H1 (cell line): ENCODE measurements at regions of chr2 and their contacts with region 1.

Region 1: GRCh38 chr2:10057231-10058107 is 14.1 kb downstream of the KLF11 start:
- DNase-seq: peak; percentile 80 to 85
- H3K4me3 ChIP-seq: peak overlapping the region; percentile 28 to 56 (median 40); a peak in 7 of 8 replicates
- H3K27ac ChIP-seq: no peak overlapping the region
- H3K4me1 ChIP-seq: peaks cover 0 to 16% (median 2%) of the 10 kb centered on the region in 4 experiments; a peak in 3 of 7 replicates
- H3K27me3 ChIP-seq: no peaks in the 10 kb centered on the region
- CTCF ChIP-seq: no peak
- EP300 ChIP-seq: no peak
- POLR2A ChIP-seq: peak in 1 of 2 experiments; percentile 42; a peak in 1 of 3 replicates
- RAD21 ChIP-seq: no peak; a peak in 1 of 4 replicates

Region 2: GRCh38 chr2:9993488-9994165 is 63.8 kb before region 1 on chr2:
- CTCF ChIA-PET with region 1: no interaction called
- POLR2A ChIA-PET with region 1: no interaction called
- DNase-seq: no peak
- H3K4me3 ChIP-seq: no peak overlapping the region
- H3K27ac ChIP-seq: no peak overlapping the region
- H3K4me1 ChIP-seq: no peaks in the 10 kb centered on the region
- H3K27me3 ChIP-seq: no peaks in the 10 kb centered on the region
- CTCF ChIP-seq: no peak
- EP300 ChIP-seq: no peak
- POLR2A ChIP-seq: no peak
- RAD21 ChIP-seq: no peak

Region 3: GRCh38 chr2:10036095-10036884 is 21.2 kb before region 1 on chr2:
- CTCF ChIA-PET with region 1: interaction called, 11 read pairs
- POLR2A ChIA-PET with region 1: interaction called, 3 read pairs
- DNase-seq: no peak
- H3K4me3 ChIP-seq: no peak overlapping the region
- H3K27ac ChIP-seq: no peak overlapping the region
- H3K4me1 ChIP-seq: no peaks in the 10 kb centered on the region; a peak in 1 of 7 replicates
- H3K27me3 ChIP-seq: peaks cover 0 to 6% (median 3%) of the 10 kb centered on the region in 4 experiments; a peak in 4 of 7 replicates
- CTCF ChIP-seq: peak; percentile 60 to 76 (median 70)
- EP300 ChIP-seq: no peak
- POLR2A ChIP-seq: no peak
- RAD21 ChIP-seq: peak; percentile 36 to 49

Region 4: DNA sequence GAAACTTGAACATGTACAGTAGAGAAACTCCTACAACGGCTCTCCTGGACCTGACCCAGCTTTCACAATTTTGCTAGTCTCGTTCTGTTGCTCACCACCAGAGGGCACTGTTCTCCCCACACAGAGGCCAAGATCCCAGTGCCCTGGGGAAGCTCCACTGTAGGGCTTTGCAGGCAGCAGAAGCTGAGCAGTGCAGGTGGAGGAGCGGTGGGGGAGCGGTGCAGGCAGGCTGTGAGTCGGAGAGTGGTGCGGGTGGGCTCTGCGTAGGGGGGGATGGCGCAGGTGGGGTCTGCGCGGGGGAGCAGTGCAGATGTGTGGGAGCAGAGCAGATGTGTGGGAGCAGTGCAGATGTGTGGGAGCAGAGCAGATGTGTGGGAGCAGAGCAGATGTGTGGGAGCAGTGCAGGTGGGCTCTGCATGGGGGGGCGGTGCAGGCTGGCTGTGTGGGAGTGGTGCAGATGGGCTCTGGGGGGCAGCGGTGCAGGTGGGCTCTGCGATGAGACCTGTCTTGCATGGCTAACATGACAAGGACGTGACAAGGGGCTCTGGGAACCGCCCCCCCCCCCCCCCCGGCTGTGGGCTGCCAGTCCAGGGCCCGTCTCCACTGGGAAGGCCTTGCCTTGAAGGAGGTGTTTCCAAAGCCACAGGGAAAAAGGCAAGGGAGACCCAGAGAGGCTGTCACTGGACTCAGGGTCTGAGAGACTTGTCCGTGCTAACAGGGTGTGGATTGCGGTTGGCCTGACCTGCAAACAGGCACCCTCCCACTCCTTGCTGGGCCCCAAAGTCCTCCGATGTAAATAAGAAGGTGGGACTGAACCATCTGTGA is 15.4 kb after region 1 on chr2:
- CTCF ChIA-PET with region 1: interaction called, 68 read pairs
- POLR2A ChIA-PET with region 1: interaction called, 4 read pairs
- DNase-seq: peak; percentile 43 to 82
- H3K4me3 ChIP-seq: no peak overlapping the region
- H3K27ac ChIP-seq: no peak overlapping the region
- H3K4me1 ChIP-seq: peaks cover 0 to 12% (median 7%) of the 10 kb centered on the region in 4 experiments; a peak in 2 of 7 replicates
- H3K27me3 ChIP-seq: peaks cover 0 to under 1% (median 0%) of the 10 kb centered on the region in 4 experiments; a peak in 1 of 7 replicates
- CTCF ChIP-seq: peak; percentile 84 to 90 (median 89)
- EP300 ChIP-seq: no peak
- POLR2A ChIP-seq: no peak
- RAD21 ChIP-seq: peak; percentile 76 to 82

Region 5: DNA sequence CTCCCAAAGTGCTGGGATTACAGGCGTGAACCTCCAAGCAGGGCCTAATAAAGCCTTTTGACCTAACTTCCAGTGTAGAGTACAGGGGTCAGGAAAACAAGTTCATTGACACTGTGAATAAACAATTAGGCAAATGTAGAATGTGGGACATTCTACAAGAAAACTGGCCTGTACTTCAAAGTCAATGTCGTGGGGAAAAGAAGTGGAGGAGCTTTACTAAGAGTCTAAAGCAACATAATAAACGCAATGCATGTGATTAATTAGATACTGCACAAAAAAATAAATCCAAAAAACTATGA is 61.5 kb after region 1 on chr2:
- CTCF ChIA-PET with region 1: no interaction called
- POLR2A ChIA-PET with region 1: no interaction called
- DNase-seq: no peak
- H3K4me3 ChIP-seq: no peak overlapping the region
- H3K27ac ChIP-seq: no peak overlapping the region
- H3K4me1 ChIP-seq: peaks cover 0 to 3% (median under 1%) of the 10 kb centered on the region in 4 experiments; a peak in 2 of 7 replicates
- H3K27me3 ChIP-seq: no peaks in the 10 kb centered on the region
- CTCF ChIP-seq: no peak
- EP300 ChIP-seq: no peak
- POLR2A ChIP-seq: no peak
- RAD21 ChIP-seq: no peak